Endothelial cell of umbilical vein (primary cell): ENCODE measurements at regions of chr7 and their contacts with region 1.

Region 1: DNA sequence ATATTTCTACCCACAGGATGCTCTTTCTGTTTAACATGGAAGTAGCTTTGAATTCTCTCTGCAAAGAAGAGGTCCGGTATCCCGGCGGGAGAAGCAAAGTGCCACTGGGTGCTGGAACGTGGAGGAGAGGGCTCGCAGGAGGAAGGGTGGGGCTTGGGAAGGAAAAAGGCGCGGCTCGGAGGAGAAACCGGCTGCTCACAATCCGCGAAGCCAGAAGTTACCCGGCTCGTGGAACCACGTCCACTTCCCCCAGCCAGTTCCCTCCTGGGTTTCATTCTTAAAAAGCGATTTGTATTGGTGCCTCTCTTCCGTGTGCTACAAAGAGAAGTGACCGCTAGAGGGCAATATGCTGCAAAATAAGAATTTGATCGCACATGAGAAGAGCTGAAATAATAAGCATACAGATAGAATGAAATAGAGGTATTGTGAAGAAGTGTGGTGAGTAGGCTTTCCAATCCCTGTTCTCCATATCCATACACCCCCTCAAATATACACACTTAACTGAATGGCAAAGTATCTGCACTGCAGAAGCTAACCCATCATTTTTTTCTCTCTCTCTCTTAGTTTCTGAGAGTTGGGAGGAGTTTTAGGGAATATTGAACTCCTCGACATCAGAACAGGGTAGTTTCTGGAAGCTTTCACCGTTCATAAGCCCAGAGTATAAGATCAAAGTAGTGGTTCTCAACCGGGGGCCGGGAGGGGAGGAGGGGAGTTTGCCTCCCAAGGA is 31.1 kb downstream of the TRIL start:
- DNase-seq: peak; percentile 83
- H3K4me3 ChIP-seq: peak overlapping the region; percentile 29 to 75 (median 70)
- H3K27ac ChIP-seq: no peak overlapping the region
- H3K4me1 ChIP-seq: no peaks in the 10 kb centered on the region
- H3K27me3 ChIP-seq: peaks cover 4 to 6% of the 10 kb centered on the region in 2 experiments
- CTCF ChIP-seq: peak; percentile 67 to 81
- POLR2A ChIP-seq: no peak

Region 2: GRCh38 chr7:28939844-28940544 is 13.0 kb after region 1 on chr7:
- CTCF ChIA-PET with region 1: interaction called, 63 read pairs
- POLR2A ChIA-PET with region 1: no interaction called
- dilution Hi-C with region 1: no loop called
- intact Hi-C with region 1: no loop called
- DNase-seq: no peak
- H3K4me3 ChIP-seq: no peak overlapping the region
- H3K27ac ChIP-seq: no peak overlapping the region
- H3K4me1 ChIP-seq: no peaks in the 10 kb centered on the region
- H3K27me3 ChIP-seq: no peaks in the 10 kb centered on the region
- CTCF ChIP-seq: no peak
- POLR2A ChIP-seq: no peak

Region 3: GRCh38 chr7:29035044-29035740 is 108.2 kb after region 1 on chr7:
- CTCF ChIA-PET with region 1: interaction called, 22 read pairs
- POLR2A ChIA-PET with region 1: no interaction called
- dilution Hi-C with region 1: no loop called
- intact Hi-C with region 1: loop called (anchors 1 kb)
- DNase-seq: peak; percentile 91
- H3K4me3 ChIP-seq: no peak overlapping the region
- H3K27ac ChIP-seq: peak overlapping the region; percentile 72
- H3K4me1 ChIP-seq: peaks cover 63% of the 10 kb centered on the region
- H3K27me3 ChIP-seq: no peaks in the 10 kb centered on the region
- CTCF ChIP-seq: no peak
- POLR2A ChIP-seq: peak; percentile 40

Region 4: DNA sequence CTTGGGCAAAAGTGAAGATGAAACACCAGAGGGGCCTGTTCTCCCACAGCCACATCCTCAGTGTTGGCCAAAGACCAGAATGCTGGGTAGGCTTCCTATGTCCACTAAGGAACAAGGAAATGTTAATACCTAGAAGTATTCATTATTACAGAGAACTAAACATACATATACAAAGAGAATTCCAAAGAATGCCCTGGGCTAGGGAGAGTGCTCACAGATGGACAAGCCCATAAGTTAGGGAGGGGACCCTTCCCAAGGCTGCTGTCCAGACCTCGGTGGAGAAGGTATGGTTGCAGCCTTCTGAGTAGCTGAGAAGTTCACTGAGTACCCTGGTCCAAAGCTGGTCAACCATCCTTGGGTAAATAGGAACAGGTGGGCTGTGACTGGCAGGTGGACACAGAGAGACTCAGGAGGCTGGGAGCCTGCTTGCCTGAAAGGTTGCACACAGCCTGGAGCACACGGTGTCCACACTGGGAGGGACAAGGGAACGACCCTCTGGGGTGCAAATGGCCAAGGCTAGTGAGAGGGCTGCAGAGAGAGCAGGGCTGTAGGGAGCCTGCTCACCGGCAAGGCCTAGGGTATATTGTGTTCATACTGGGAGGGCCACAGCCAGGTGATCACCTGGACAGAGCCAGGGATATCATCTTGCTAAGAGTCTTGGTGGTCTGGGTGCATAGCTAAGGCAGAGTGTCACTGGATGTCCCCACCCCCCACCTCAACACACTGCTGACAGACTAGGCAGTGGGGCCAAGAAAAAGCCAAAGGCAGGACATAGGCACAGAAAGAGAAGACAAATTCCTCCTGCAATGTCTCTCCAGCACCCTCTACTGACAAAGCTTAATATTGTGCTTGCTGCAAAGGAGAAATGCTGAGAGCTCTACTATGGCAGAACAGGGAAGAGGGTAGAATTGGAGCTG is 179.0 kb after region 1 on chr7:
- CTCF ChIA-PET with region 1: interaction called, 1,408 read pairs
- POLR2A ChIA-PET with region 1: no interaction called
- dilution Hi-C with region 1: no loop called
- intact Hi-C with region 1: loop called (anchors 1 kb)
- DNase-seq: peak; percentile 66
- H3K4me3 ChIP-seq: no peak overlapping the region
- H3K27ac ChIP-seq: no peak overlapping the region
- H3K4me1 ChIP-seq: no peaks in the 10 kb centered on the region
- H3K27me3 ChIP-seq: peaks cover 8 to 13% of the 10 kb centered on the region in 2 experiments
- CTCF ChIP-seq: peak; percentile 69 to 75
- POLR2A ChIP-seq: no peak

Region 5: GRCh38 chr7:29345600-29345999 is 418.6 kb after region 1 on chr7:
- CTCF ChIA-PET with region 1: interaction called, 28 read pairs
- POLR2A ChIA-PET with region 1: no interaction called
- dilution Hi-C with region 1: no loop called
- intact Hi-C with region 1: loop called (anchors 1 kb)
- DNase-seq: peak; percentile 41
- H3K4me3 ChIP-seq: no peak overlapping the region
- H3K27ac ChIP-seq: no peak overlapping the region
- H3K4me1 ChIP-seq: no peaks in the 10 kb centered on the region
- H3K27me3 ChIP-seq: peaks cover 1 to 5% of the 10 kb centered on the region in 2 experiments
- CTCF ChIP-seq: peak; percentile 45 to 49
- POLR2A ChIP-seq: no peak